Activated CD4-positive, alpha-beta memory T cell treated with anti-CD3 and anti-CD28 coated beads for 36 hours (primary cell): ENCODE measurements at regions of chr1 and their contacts with region 1.

Region 1: GRCh38 chr1:234309598-234310459 is 63.4 kb upstream of the COA6 start:
- DNase-seq: peak; percentile 84
- H3K4me3 Mint-ChIP-seq: no peak overlapping the region
- H3K27ac Mint-ChIP-seq: no peak overlapping the region
- H3K4me1 Mint-ChIP-seq: peaks cover 18% of the 10 kb centered on the region
- H3K27me3 Mint-ChIP-seq: peaks cover 15% of the 10 kb centered on the region

Region 2: GRCh38 chr1:234125283-234125682 is 184.5 kb before region 1 on chr1:
- CTCF ChIA-PET with region 1: interaction called, 27 read pairs
- POLR2A ChIA-PET with region 1: no interaction called
- intact Hi-C with region 1: loop called (anchors 1 kb)
- DNase-seq: peak; percentile 59
- H3K4me3 Mint-ChIP-seq: no peak overlapping the region
- H3K27ac Mint-ChIP-seq: no peak overlapping the region
- H3K4me1 Mint-ChIP-seq: no peaks in the 10 kb centered on the region
- H3K27me3 Mint-ChIP-seq: peaks cover 25% of the 10 kb centered on the region

Region 3: GRCh38 chr1:234188454-234188792 is 121.4 kb before region 1 on chr1:
- CTCF ChIA-PET with region 1: interaction called, 10 read pairs
- POLR2A ChIA-PET with region 1: no interaction called
- intact Hi-C with region 1: no loop called
- DNase-seq: peak; percentile 34
- H3K4me3 Mint-ChIP-seq: no peak overlapping the region
- H3K27ac Mint-ChIP-seq: no peak overlapping the region
- H3K4me1 Mint-ChIP-seq: peaks cover 6% of the 10 kb centered on the region
- H3K27me3 Mint-ChIP-seq: peaks cover 56% of the 10 kb centered on the region

Region 4: DNA sequence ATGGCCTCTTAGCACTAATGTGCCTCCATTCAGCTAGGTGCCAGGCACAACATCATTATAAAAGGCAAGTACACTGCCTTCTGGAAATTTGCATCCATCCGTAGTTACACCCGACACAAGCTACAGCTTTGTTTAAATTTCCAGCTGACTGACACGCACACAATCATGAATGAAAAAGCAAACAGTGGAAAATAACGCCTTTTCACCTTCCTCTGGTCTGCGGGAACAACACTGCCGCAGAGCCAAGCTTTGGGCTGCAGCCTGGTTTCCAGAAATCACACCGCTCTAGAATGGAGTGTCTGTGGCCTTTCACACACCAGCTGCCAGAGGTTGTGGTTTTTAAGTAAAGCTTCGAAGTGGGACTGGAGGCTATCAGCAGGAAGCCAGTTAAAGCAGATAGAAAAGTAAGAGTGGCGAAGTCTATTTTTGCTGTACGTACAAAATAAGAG is 79.4 kb before region 1 on chr1:
- CTCF ChIA-PET with region 1: interaction called, 13 read pairs
- POLR2A ChIA-PET with region 1: no interaction called
- intact Hi-C with region 1: no loop called
- DNase-seq: no peak
- H3K4me3 Mint-ChIP-seq: no peak overlapping the region
- H3K27ac Mint-ChIP-seq: no peak overlapping the region
- H3K4me1 Mint-ChIP-seq: peaks cover 8% of the 10 kb centered on the region
- H3K27me3 Mint-ChIP-seq: peaks cover 25% of the 10 kb centered on the region

Region 5: DNA sequence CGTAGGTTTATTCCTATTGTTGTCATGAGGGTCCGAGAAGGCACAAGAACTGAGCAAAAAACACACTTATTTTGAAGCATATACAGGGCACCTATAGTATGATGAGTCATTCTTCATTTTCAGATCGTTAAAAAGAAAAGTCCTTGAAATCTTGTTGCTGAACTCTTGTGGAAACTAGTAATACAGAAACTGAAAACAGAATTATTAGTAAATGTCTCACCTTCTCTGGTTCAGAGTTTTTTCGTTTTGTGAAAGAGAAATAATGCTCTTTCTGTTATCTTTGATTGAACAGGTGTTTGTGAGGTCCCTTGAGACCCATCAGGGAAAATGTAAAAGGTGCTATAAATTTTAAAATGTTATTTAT is 38.6 kb before region 1 on chr1:
- CTCF ChIA-PET with region 1: interaction called, 14 read pairs
- POLR2A ChIA-PET with region 1: no interaction called
- intact Hi-C with region 1: loop called (anchors 1 kb)
- DNase-seq: no peak
- H3K4me3 Mint-ChIP-seq: no peak overlapping the region
- H3K27ac Mint-ChIP-seq: no peak overlapping the region
- H3K4me1 Mint-ChIP-seq: peaks cover 32% of the 10 kb centered on the region
- H3K27me3 Mint-ChIP-seq: peaks cover 30% of the 10 kb centered on the region

Region 6: GRCh38 chr1:234295068-234295467 is 14.8 kb before region 1 on chr1:
- CTCF ChIA-PET with region 1: interaction called, 19 read pairs
- POLR2A ChIA-PET with region 1: no interaction called
- intact Hi-C with region 1: no loop called
- DNase-seq: no peak
- H3K4me3 Mint-ChIP-seq: no peak overlapping the region
- H3K27ac Mint-ChIP-seq: no peak overlapping the region
- H3K4me1 Mint-ChIP-seq: no peaks in the 10 kb centered on the region
- H3K27me3 Mint-ChIP-seq: peaks cover 18% of the 10 kb centered on the region

Region 7: DNA sequence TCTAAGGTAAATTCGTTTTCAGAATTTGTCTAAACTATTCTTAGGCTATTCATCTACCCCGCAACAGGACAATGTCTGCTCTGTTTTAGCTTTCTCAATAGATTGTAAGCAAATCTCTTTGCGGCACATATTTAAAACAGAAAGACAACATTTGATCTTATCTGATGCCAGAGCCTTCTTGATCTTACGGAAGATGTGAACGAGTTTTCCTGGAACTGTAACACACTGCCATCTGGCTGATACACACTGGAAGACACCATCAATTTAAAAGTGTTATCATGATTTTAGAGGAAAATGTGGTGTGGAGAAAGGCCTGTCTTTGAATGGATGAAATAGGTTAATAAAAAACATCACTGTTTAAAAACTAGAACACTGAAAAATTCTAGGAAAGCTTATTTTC is 99.5 kb after region 1 on chr1:
- CTCF ChIA-PET with region 1: no interaction called
- POLR2A ChIA-PET with region 1: no interaction called
- intact Hi-C with region 1: loop called (anchors 1 kb)
- DNase-seq: peak; percentile 29
- H3K4me3 Mint-ChIP-seq: peak overlapping the region; percentile 45
- H3K27ac Mint-ChIP-seq: peak overlapping the region; percentile 84
- H3K4me1 Mint-ChIP-seq: peaks cover 32% of the 10 kb centered on the region
- H3K27me3 Mint-ChIP-seq: no peaks in the 10 kb centered on the region

Region 8: GRCh38 chr1:235495551-235495950 is 1185.7 kb after region 1 on chr1:
- CTCF ChIA-PET with region 1: no interaction called
- POLR2A ChIA-PET with region 1: no interaction called
- intact Hi-C with region 1: no loop called
- DNase-seq: no peak
- H3K4me3 Mint-ChIP-seq: no peak overlapping the region
- H3K27ac Mint-ChIP-seq: no peak overlapping the region
- H3K4me1 Mint-ChIP-seq: peaks cover 20% of the 10 kb centered on the region
- H3K27me3 Mint-ChIP-seq: no peaks in the 10 kb centered on the region